Heart right ventricle (tissue), 16 donors: ENCODE measurements at regions of chr11 and their contacts with region 1.

Region 1: GRCh38 chr11:47407746-47408590 is at the start of gene SLC39A13:
- DNase-seq: peak; percentile 93 to 96
- ATAC-seq: peak; percentile 87 to 94 (median 91)
- H3K4me3 ChIP-seq: peak within 1 kb of the TSS; percentile 59 to 86 (median 77)
- H3K27ac ChIP-seq: peak within 1 kb of the TSS; percentile 89 to 98 (median 94)
- H3K4me1 ChIP-seq: peaks cover 11 to 45% (median 32%) of the 10 kb centered on the region in 9 donors
- H3K27me3 ChIP-seq: no peaks in the 10 kb centered on the region
- CTCF ChIP-seq: peak; percentile 55 to 96 (median 87)
- total RNA-seq, gene SLC39A13: 31.1 to 54.5 (median 40.8) TPM

Region 2: DNA sequence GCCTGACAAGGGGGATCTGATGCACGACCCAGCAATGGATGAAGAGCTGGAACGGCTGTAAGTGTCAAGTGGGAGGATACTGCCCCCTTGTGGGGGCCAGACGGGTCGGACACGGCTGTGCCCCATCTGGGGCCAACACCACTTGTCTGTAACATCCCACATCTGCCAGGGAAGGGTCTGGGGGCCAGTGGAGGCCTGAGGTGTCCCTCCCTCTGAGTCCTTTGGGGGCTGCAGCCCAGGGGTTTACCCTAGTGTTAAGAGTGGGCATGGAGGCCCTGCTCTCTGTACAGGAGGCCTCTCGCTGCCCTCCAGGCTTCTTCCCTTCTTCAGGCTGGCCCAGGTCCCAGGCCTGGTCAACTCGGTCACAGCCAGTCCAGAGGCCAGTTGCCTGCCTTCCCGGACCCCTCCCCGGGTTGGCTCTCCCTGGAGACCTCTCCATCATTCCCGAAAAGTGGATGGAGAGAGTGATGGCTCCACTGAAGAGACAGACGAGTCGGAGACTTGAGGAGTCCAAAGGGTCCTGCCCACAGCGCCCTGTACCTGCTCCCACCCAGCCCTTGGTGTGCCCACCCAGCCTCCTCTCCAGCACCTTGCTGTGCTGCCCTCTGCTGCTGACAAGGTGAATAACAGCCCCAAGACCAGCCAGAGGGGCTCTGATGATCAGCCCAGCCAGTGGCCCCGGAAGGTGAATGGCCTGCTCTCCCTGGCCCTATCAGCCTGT is 246.7 kb before region 1 on chr11:
- intact Hi-C with region 1: no loop called
- DNase-seq: peak; percentile 45 to 50
- ATAC-seq: peak; percentile 62 to 78 (median 70)
- H3K4me3 ChIP-seq: no peak overlapping the region
- H3K27ac ChIP-seq: peak overlapping the region in 2 of 10 donors; percentile 7 to 39
- H3K4me1 ChIP-seq: peaks cover 0 to 31% (median 15%) of the 10 kb centered on the region in 9 donors
- H3K27me3 ChIP-seq: no peaks in the 10 kb centered on the region
- CTCF ChIP-seq: peak; percentile 47 to 69 (median 59)

Region 3: GRCh38 chr11:47355283-47356128 is 52.5 kb before region 1 on chr11:
- intact Hi-C with region 1: no loop called
- DNase-seq: peak; percentile 95 to 97
- ATAC-seq: peak; percentile 35 to 63 (median 56)
- H3K4me3 ChIP-seq: peak overlapping the region; percentile 32 to 63 (median 47)
- H3K27ac ChIP-seq: peak overlapping the region; percentile 81 to 99 (median 94)
- H3K4me1 ChIP-seq: peaks cover 0 to 26% (median 4%) of the 10 kb centered on the region in 9 donors
- H3K27me3 ChIP-seq: no peaks in the 10 kb centered on the region
- CTCF ChIP-seq: peak; percentile 85 to 98 (median 94)

Region 4: DNA sequence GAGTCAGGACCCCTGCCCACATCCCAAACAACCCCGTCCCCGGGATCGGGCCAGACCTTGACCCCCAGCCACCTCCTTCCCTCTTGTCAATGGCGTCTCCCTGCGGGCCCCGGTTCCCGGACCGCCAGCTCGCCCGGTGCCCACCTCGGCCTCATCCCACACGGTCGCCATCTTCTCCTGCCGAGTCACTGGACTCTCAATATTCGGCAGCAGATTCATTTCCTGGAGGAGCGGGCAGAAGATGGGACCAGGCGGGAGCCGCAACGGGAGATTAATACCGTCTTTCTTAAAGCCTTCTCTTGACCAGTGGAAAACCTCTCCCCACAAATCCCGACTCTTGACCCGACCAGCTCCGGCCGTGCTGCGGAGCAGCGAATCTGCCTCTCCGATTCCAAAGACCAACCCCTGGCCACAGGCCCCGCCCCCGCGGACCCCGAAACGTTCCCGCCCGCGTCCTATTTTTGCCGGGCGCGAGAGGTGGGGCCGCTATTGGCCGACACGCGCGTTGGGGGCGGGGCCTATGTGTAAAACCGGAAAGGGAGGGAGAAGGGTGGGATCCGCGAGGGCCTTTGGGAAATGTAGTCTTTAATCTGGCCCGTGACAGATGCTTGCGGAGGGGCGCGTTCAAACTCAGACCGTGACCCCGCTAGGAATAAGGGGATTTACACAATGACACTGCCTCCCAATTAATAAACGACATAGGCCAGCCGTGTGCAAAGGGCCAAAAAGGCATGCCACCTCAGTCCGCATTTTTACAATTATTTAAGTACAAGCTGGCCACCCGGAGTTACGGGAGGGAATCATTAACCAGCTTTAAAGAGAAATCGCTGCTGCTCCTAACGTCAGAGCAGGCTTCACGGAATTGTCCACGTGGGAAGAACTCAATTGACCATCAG is 18.3 kb after region 1 on chr11 and contains the start of gene PSMC3:
- intact Hi-C with region 1: loop called in 3 of 10 experiments (anchors 1 to 2 kb)
- DNase-seq: peak; percentile 98 to 99
- ATAC-seq: peak; percentile 95 to 99 (median 98)
- H3K4me3 ChIP-seq: peak within 1 kb of the TSS; percentile 55 to 99 (median 88)
- H3K27ac ChIP-seq: peak within 1 kb of the TSS; percentile 74 to 98 (median 92)
- H3K4me1 ChIP-seq: peaks cover 11 to 21% (median 16%) of the 10 kb centered on the region in 9 donors
- H3K27me3 ChIP-seq: no peaks in the 10 kb centered on the region
- CTCF ChIP-seq: no peak
- total RNA-seq, gene PSMC3: 129 to 171 (median 140) TPM